ENCODE measurements at regions of chr2 and their contacts with region 1.

Region 1: GRCh38 chr2:193670478-193670877 is 1475.7 kb upstream of the TMEFF2 start:
- DNase-seq: no peak
- ATAC-seq: no peak
- H3K4me3 Mint-ChIP-seq: no peak overlapping the region
- H3K27ac Mint-ChIP-seq: no peak overlapping the region
- H3K4me1 Mint-ChIP-seq: no peaks in the 10 kb centered on the region
- H3K27me3 Mint-ChIP-seq: no peaks in the 10 kb centered on the region
- CTCF ChIP-seq: no peak

Region 2: DNA sequence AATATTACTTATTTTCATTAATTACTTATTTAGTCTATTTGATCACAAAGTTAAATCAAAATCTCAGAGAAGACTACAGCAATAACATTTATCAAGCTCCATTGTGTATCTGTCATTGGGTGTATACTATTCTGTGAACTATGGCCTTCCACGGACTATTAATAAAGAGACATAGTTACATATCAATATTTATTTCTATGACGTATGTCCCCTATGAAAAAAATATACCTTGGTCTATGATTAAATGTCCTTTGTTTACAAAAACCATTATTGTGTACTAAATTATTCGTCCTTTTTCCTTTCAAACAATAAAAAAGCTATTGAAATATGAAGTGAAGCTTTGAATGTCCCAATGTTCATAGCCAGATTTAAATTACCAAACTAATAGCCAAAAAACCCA is 1090.6 kb after region 1 on chr2:
- CTCF ChIA-PET with region 1: no interaction called
- POLR2A ChIA-PET with region 1: no interaction called
- intact Hi-C with region 1: loop called (anchors 5 kb)
- DNase-seq: no peak
- ATAC-seq: no peak
- H3K4me3 Mint-ChIP-seq: no peak overlapping the region
- H3K27ac Mint-ChIP-seq: no peak overlapping the region
- H3K4me1 Mint-ChIP-seq: no peaks in the 10 kb centered on the region
- H3K27me3 Mint-ChIP-seq: no peaks in the 10 kb centered on the region
- CTCF ChIP-seq: no peak

Measured in activated B cell treated with CpG ODN at 0.5 μM for 24 hours (primary cell).